ENCODE measurements at regions of chr2 and their contacts with region 1.

Region 1: GRCh38 chr2:198098918-198099317 is 294.5 kb downstream of the PLCL1 start:
- DNase-seq: no peak
- H3K4me3 ChIP-seq: no peak overlapping the region
- CTCF ChIP-seq: no peak
- POLR2A ChIP-seq: no peak

Region 2: GRCh38 chr2:196105951-196106350 is 1993.0 kb before region 1 on chr2:
- intact Hi-C with region 1: loop called (anchors 5 kb)
- DNase-seq: no peak
- H3K4me3 ChIP-seq: no peak overlapping the region
- CTCF ChIP-seq: no peak
- POLR2A ChIP-seq: no peak

Measured in lower leg skin (tissue), 4 donors.